ENCODE measurements at regions of chr9 and their contacts with region 1.

Region 1: GRCh38 chr9:2158111-2158610 is 143.0 kb downstream of the SMARCA2 start:
- DNase-seq: peak; percentile 66
- H3K4me3 Mint-ChIP-seq: peak overlapping the region; percentile 80
- H3K27ac Mint-ChIP-seq: peak overlapping the region; percentile 94
- H3K4me1 Mint-ChIP-seq: peaks cover 58% of the 10 kb centered on the region
- H3K27me3 Mint-ChIP-seq: no peaks in the 10 kb centered on the region

Region 2: DNA sequence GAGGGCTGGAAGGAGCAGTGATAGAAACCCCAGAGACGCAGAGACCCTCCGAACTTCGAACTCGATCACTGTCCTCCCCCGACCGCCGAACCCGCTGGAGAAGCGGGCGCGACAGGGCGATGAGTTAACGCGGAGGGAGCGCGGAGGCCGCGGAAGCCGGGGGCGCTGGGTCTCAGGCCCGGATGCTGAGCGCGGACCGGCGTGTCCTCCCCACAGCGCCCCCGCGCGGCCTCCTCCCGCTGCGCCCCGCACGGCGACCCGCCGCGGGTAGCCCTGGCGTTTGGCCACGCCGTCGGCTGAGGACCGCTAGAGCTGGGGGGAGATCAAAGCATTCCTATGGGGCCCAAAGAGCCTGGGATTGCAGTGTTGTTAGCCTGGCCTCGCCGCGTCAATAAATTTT is 1115.7 kb before region 1 on chr9:
- CTCF ChIA-PET with region 1: no interaction called
- intact Hi-C with region 1: loop called (anchors 10 kb)
- DNase-seq: peak; percentile 54
- H3K4me3 Mint-ChIP-seq: peak overlapping the region; percentile 50
- H3K27ac Mint-ChIP-seq: no peak overlapping the region
- H3K4me1 Mint-ChIP-seq: peaks cover 31% of the 10 kb centered on the region
- H3K27me3 Mint-ChIP-seq: peaks cover 72% of the 10 kb centered on the region

Region 3: GRCh38 chr9:2125906-2126305 is 32.3 kb before region 1 on chr9:
- CTCF ChIA-PET with region 1: interaction called, 5 read pairs
- intact Hi-C with region 1: loop called (anchors 1 kb)
- DNase-seq: no peak
- H3K4me3 Mint-ChIP-seq: peak overlapping the region; percentile 46
- H3K27ac Mint-ChIP-seq: peak overlapping the region; percentile 85
- H3K4me1 Mint-ChIP-seq: peaks cover 31% of the 10 kb centered on the region
- H3K27me3 Mint-ChIP-seq: no peaks in the 10 kb centered on the region

Region 4: GRCh38 chr9:2241836-2242741 is 83.9 kb after region 1 on chr9:
- CTCF ChIA-PET with region 1: no interaction called
- intact Hi-C with region 1: loop called (anchors 1 kb)
- DNase-seq: peak; percentile 76
- H3K4me3 Mint-ChIP-seq: peak overlapping the region; percentile 73
- H3K27ac Mint-ChIP-seq: no peak overlapping the region
- H3K4me1 Mint-ChIP-seq: peaks cover 10% of the 10 kb centered on the region
- H3K27me3 Mint-ChIP-seq: peaks cover 17% of the 10 kb centered on the region

Region 5: DNA sequence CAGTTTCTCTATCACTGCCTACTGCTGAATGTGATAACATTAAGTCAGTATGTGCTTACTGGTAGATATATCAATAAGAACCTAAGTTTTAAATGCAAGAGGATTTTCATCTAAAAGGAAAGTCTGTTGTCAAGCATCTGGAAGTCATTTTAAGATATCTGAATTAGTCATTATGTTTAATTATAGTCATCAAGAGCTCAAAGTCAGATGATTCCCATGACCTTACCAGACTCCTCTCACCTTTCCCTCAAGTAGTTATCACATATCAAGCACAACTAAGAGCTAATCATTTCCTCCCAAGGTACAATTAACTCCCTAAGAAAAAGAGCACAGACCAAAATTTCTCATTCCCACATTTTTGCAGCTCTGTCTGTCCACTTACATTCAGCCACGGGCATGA is 640.3 kb after region 1 on chr9:
- CTCF ChIA-PET with region 1: no interaction called
- intact Hi-C with region 1: loop called (anchors 1 kb)
- DNase-seq: no peak
- H3K4me3 Mint-ChIP-seq: no peak overlapping the region
- H3K27ac Mint-ChIP-seq: no peak overlapping the region
- H3K4me1 Mint-ChIP-seq: peaks cover 15% of the 10 kb centered on the region
- H3K27me3 Mint-ChIP-seq: no peaks in the 10 kb centered on the region